Activated CD4-positive, alpha-beta T cell treated with anti-CD3 and anti-CD28 coated beads, Interleukin-2, amount 10 ng/mL, durations not matched to agents 7 days and 5 days (primary cell): ENCODE measurements at regions of chr19 and their contacts with region 1.

Region 1: GRCh38 chr19:11422163-11423021 is 3.3 kb upstream of the RGL3 start:
- DNase-seq: peak; percentile 62
- H3K4me3 Mint-ChIP-seq: peak overlapping the region; percentile 49
- H3K27ac Mint-ChIP-seq: peak overlapping the region; percentile 36
- H3K4me1 Mint-ChIP-seq: peaks cover 34% of the 10 kb centered on the region
- H3K27me3 Mint-ChIP-seq: peaks cover 57% of the 10 kb centered on the region

Region 2: GRCh38 chr19:11390933-11391680 is 31.3 kb before region 1 on chr19:
- CTCF ChIA-PET with region 1: no interaction called
- POLR2A ChIA-PET with region 1: no interaction called
- DNase-seq: no peak
- H3K4me3 Mint-ChIP-seq: no peak overlapping the region
- H3K27ac Mint-ChIP-seq: no peak overlapping the region
- H3K4me1 Mint-ChIP-seq: peaks cover 13% of the 10 kb centered on the region
- H3K27me3 Mint-ChIP-seq: peaks cover 7% of the 10 kb centered on the region

Region 3: GRCh38 chr19:11435058-11435832 is 12.9 kb after region 1 on chr19 and contains the starts of genes ODAD3 and PRKCSH:
- CTCF ChIA-PET with region 1: interaction called, 26 read pairs
- POLR2A ChIA-PET with region 1: interaction called, 3 read pairs
- DNase-seq: peak; percentile 100
- H3K4me3 Mint-ChIP-seq: peak within 1 kb of the TSS; percentile 98
- H3K27ac Mint-ChIP-seq: peak within 1 kb of the TSS; percentile 96
- H3K4me1 Mint-ChIP-seq: peaks cover 27% of the 10 kb centered on the region
- H3K27me3 Mint-ChIP-seq: peaks cover 2% of the 10 kb centered on the region
- total RNA-seq, gene ODAD3: not detected
- total RNA-seq, gene PRKCSH: 321 to 338 TPM